ENCODE measurements at regions of chr1 and their contacts with region 1.

Region 1: DNA sequence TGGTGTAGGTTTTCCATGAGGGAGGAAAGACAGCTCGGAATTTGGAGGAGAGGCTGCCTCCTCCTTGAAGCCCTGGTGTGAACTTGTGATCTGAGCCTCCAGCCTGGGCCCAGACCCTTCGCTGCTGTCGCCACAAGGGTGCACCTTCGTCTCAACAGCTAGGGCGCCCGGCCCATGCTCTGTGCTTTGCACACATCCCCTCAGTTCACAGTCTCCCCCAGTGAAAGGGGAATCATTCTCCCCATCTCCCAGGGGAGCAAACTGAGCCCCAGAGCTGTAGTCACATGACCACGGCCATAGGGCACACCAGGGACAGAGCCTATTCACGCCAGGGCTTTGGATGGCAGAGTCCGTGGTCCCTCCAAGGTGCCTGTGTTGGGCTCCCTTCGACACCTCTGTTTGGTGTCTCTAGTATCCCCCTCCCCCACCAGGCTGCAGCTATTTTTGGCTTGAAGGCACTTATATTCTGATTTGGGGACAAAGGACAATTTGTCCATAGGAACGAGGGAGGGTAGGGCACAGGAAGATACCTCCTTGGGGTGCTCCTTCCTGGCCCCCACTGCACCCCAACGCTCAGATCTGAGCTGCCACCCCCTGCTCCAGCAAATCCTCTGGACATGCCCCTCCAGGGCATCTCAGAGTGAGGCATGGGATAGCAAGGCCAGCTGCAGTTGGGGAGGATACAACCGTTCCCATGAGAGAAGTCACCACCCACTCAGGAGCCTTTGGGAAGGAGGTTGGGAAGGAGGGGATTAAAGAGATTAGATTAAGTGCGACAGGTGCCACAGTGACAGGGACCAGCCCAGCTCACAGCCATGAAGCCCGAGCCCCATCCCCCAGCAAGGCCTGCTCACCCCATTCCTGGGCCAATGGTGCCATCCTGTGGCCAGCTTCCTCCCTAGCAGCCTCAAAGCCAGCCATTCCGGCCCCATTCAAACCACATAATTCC is 15.7 kb downstream of the MATN1 start:
- DNase-seq: peak; percentile 91

Region 2: DNA sequence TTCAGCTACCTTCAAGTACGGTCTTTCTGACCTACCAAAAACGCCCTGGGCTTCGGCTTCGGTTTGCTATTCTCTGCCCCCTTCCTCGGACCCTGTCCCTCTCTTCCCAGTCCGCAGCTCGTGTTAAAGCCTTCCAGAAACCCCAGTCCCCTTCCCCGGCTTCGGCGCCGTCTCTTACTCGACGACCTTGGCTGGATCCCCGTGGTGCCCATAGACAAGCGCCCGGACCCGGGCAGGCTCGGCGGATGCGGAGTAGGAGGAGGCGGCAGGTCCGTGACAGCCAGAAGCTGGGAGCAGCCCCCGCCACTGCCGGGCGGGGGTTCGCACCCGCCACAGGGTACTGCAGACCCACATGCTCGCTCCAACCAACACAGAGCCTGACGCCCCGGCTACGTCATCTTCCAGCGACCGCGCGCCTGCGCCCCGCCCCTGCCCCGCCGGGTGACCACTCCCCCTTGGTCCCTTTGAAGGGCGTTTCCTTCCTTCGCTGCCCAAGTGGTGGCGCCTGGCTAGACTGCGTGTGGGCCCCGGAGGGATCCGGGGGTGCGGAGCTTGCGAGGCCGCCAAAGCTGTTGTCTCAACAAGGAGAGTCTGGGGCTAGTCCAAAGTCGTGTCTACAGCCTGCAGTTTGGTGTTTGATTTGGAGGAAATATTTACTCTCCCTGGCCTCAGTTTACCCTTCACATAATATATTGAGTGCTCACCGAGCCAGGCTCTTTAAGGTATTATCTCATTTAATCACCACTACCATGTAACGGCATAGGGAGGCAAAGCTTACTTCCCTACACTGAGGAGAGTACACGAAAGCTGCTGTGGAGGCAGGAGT is 1476.9 kb before region 1 on chr1 and contains the start of gene MECR:
- intact Hi-C with region 1: loop called (anchors 5 to 10 kb)
- DNase-seq: peak; percentile 98
- total RNA-seq, gene MECR: 13.9 to 20.0 TPM

Region 3: DNA sequence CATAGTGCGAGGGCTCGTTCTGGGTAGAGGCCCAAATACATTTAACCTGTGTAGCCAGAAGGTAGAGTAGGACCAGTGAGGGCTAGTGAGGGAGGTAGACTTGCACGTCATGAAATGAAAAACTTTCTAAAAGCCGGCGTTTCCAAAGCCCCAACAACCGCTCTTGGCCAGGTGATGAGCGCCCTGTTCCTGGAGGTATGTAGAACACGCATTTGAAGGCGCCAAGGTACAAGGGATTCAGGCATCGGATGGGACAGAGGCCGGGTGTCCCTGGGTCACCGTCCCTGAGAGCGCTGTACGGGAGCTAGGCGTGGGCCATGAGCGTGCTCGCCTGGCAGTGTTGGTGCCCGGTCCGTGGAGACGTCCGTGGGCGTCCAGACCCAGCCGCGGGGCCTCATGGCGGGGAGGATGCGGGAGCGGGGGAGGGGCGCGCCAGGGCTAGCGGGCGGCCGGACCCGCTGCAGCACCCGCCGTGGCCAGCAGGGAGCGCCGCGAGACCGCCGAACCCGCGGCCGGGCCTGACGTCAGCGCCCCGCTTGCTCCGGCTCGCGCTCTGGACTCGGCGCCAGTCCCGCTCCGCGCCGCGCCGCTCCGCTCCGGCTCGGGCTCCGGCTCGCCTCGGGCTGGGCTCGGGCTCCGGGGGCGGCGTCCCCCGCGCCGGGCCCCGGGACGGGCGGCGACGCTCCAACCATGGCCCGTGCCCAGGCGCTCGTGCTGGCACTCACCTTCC is 1471.6 kb before region 1 on chr1 and contains the start of gene PTPRU:
- intact Hi-C with region 1: loop called (anchors 5 to 10 kb)
- DNase-seq: peak; percentile 93
- total RNA-seq, gene PTPRU: 12.3 to 16.5 TPM

Region 4: DNA sequence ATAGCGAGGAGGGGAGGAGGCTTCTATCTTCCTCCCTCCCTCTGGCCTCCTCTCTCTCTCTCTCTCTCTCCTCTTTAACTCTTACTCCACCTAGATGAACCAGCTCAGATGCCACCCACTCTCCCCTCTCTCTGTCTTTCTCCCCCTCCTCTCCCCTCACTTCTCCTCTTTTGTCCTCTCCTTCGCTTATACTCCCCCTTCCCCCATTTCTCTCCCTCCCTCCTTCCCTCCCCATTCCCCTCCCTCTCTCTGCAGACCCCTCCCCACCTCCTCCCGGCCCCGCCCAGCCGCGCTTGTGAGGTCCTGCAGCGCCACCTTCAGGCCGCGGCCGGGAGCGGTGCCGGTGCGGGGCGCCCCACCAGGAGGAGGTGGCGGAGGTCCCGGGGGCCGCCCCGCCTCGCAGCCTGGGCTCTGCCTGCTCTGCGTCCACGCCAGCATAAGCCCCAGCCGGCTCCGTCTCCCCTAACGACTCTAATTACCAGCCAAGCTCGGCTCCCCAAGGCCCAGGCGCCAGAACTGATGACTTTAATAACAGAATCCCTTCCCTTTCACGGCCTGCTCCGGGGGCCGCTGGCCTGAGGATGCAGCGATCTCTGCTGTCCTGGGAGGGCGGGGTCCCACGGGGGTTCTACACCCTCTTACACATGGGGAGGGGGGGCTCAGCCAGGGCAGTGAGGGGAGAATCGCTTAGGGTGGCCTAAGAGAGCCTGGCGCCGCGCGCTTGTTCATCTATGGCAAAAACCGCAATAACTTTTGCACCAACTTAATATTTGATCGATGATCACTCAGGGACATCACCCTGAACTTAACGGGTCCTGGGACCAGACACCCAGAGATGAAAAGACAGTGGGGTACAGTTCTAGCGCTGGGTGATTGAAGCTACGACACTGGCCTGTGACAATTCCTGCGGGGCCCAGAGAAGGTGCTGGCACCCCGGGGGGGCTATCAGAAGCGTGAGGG is 621.6 kb before region 1 on chr1:
- intact Hi-C with region 1: loop called in 1 of 2 experiments (anchors 10 kb)
- DNase-seq: peak; percentile 89

Region 5: DNA sequence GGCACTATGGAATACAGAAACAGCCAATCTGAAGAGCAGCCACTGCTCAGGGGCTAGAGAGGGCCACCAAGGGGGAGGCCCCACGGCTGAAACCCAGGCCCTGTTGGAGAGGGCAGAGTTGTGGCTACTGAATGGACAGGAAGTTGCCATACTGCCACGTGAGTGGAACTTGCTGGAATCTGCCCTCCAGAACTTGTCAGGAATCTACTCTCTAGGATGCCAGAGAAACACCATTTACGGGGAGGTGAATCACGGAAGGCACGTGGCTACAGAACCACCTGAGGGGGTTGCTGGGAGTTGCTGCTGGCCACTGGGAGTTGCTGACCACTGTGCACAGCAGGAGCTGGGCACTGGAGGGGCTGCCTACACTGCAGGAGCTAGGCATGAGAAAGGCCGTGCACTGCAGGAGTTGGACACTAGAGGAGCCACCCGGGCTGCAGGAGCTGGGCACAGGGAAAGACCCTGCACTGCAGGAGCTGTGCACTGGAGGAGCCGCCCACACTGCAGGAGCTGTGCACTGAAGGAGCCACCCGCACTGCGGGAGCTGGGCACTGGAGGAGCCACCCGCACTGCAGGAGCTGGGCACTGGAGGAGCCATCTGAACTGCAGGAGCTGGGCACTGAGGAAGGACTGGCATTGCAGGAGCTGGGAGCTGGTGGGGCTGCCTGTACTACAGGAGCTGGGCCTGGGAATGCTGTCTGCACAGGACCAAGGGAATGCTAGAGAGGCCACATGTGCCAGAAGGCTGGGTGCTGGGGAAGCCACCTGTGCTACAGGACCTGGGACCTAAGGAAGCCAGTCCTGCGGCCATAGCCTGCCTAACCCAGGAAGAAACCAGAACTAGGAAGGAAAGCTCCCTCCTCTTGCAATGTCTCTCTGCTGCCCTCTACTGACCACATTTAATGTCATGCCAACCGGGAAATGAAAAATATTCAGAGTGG is 327.7 kb before region 1 on chr1:
- intact Hi-C with region 1: loop called in 1 of 2 experiments (anchors 10 kb)
- DNase-seq: peak; percentile 66

Region 6: DNA sequence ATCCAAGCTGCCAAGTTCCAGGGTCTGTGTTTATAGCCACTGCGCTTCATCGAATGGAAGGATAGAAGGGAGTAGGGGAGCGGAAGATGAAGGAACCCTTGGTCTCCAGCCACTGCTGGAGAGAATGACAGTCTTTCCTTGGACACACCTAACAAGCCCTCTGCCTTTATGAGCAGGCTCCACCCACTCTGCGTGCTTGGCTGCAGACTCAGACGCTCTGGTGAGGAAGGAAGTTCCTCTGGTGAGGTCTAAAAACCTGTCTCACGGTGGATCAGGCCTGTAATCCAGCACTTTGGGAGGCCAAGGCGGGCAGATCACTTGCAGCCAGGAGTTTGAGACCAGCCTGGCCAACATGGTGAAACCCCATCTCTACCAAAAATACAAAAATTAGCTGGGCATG is 39.7 kb before region 1 on chr1:
- intact Hi-C with region 1: no loop called
- DNase-seq: peak; percentile 70

Region 7: DNA sequence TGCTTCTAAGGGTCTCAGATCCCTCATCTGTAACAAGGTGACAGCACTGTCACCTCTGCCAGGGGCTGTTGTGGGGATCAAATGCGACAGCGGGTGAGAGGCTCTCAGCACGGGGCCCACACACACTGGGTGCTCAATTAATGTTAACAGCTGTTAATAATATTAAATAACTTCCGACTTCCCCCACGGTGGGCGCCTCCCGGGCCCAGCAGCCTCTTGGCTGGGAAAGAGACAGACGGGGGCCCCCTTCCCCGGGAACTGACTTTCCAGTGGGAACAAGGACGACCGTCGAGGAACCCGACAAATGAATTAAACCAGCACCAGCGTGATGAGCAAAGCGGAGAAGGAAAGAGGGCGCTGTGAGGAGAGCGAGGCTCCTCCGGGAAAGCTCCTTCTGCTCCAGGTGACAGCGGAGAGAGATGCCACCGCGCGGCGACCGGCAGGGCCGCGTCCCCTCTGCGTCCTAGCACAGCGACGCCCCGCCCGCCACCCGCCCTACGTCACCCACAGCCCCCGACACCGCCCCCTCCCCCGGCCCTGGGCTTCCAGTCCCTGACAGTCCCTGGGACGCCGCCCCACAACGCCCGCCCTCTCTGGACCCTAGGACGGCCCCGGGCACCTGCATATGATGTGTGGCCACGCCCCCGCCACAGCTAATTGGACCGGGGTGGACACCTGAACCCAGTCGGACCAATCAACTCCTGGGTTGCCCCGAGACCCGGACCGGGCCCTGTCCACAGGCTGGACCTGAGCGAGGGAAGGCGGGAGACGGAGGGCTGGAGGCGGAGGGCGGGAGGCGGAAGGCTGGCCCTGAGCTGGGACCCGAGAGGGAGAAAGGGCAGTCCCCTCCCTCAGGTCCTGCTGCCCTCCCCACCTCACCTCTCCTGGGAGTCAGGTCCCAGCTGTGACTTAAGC is 22.5 kb before region 1 on chr1:
- intact Hi-C with region 1: no loop called
- DNase-seq: peak; percentile 81

Measured in posterior vena cava (tissue), 2 donors.